Right cardiac atrium (tissue), 5 donors: ENCODE measurements at regions of chr9 and their contacts with region 1.

Region 1: DNA sequence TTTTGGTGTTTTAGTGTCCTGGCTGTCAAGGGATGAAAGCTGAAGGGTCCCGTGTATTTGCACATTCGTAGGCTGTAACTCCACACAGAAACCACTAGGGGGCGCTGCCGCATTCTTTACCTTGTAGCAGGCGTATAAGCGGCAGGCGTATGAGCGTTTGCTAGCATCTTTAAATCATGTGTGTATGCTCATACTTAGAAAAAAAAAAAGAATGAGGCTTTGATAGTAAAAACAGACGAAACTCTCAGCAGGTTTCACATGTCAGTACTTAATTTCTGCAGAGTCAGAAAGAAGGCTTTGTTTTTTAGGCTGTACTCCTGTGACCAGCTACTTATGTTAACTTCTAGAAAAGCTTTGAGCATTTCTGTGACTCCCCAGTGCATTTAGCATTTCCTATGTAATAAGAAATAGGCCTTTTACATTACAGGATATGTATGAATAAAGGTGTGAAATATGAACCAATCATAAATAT is 218.8 kb upstream of the ADAMTSL1 start:
- DNase-seq: peak; percentile 79 to 84 (median 80)
- ATAC-seq: peak; percentile 86 to 93
- H3K4me3 ChIP-seq: no peak overlapping the region
- H3K27ac ChIP-seq: no peak overlapping the region
- H3K4me1 ChIP-seq: peaks cover 2% of the 10 kb centered on the region
- H3K27me3 ChIP-seq: no peaks in the 10 kb centered on the region

Region 2: DNA sequence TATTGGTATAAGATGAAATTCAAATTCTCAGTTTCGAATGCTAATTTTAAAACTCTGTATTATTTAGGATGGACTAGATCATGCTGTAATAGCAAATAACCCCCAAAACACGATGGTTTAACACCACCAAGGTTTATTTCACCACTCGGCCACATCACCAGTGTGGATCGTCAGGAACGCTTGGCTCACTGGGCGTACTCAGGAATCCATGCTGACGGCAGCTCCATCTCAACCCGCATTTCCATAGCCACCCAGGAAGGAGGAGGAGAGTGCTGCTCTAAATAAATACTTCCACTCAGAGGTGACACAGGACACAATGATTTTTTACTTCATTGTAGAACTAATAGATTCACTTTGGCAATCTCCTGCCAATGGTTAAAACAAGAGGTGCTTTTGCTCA is 328.9 kb before region 1 on chr9:
- intact Hi-C with region 1: no loop called
- DNase-seq: no peak
- ATAC-seq: no peak
- H3K4me3 ChIP-seq: no peak overlapping the region
- H3K27ac ChIP-seq: no peak overlapping the region
- H3K4me1 ChIP-seq: no peaks in the 10 kb centered on the region
- H3K27me3 ChIP-seq: no peaks in the 10 kb centered on the region

Region 3: GRCh38 chr9:18173923-18174322 is 81.3 kb before region 1 on chr9:
- intact Hi-C with region 1: no loop called
- DNase-seq: no peak
- ATAC-seq: no peak
- H3K4me3 ChIP-seq: no peak overlapping the region
- H3K27ac ChIP-seq: no peak overlapping the region
- H3K4me1 ChIP-seq: no peaks in the 10 kb centered on the region
- H3K27me3 ChIP-seq: no peaks in the 10 kb centered on the region

Region 4: DNA sequence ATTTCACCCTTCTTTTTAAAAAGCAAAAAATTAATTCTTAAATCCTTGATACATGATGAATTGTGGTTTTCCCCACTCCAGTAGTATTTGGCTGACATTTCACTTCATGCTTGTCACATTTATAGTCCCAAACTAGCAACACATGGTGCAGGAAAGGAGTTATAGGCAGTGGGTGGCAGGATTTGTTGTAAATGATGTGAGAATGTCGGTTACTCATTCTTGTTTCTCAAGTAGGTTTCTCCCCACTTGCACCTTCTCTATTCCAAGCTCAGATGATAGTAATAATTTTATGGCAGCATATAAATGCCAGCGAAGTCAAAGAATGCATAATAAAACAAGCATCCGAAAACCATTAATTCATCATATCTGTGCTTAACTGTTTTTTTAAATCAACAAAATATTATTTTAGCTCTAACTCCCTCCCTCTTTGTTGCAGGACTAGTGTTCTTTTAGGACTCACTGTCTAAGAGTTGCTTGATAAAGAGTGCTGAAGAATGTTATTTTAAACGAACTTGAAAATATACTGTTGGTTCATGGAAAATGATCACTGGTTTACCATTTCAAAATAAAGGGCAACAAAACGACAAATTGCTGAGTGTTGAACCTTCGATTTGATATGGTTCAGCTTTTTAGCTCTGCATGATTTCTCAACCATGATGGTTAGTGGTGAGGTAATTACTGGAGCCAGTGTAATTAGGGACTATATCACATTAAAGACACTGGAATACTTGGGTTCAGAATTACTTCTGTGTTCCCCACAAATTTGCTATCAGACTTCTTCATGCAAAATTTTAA is 130.7 kb after region 1 on chr9:
- intact Hi-C with region 1: no loop called
- DNase-seq: no peak
- ATAC-seq: no peak
- H3K4me3 ChIP-seq: no peak overlapping the region
- H3K27ac ChIP-seq: no peak overlapping the region
- H3K4me1 ChIP-seq: peaks cover 1% of the 10 kb centered on the region
- H3K27me3 ChIP-seq: no peaks in the 10 kb centered on the region

Region 5: DNA sequence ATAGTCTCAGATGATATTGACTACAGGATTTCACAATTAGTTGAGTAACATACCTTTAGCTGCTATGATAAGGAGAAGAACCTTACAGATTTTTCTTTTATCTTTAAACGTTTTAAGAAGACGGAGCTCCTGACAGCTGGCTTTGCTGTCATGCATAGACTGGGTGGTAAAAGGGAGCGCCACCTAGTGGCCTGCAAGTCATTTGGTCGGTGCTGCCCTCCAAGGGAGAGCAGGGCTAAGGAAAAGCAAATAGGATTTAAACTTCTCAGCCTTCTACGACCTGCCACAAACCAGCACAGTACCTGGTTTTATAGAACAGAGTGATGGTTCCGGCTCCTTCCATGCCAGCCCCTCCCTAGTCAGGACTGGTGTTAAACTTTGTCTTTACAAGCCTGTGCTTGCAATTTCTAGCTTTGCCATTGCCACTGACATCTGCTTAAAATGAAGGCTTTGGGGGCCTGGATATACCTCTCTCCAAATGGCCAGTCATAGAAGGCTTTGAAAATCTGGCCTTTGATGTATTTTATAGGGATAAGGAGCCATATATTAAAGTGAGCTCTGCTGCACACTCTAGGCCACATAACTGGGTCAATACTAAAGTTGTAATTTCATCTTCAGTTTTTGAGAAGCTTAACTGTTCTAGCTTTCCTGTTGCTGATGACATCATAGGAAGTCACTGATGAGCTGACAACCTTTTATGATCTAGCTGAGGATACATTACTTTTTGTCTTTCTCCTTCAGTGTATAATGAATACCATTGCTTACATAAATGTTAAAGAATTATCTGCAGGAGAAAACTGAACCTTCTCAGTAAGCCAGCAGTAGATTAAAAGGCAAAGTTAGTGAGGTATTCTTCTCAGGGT is 187.7 kb after region 1 on chr9:
- intact Hi-C with region 1: loop called in 3 of 4 experiments (anchors 2 to 10 kb)
- DNase-seq: peak; percentile 71 to 83 (median 83)
- ATAC-seq: peak; percentile 74 to 85
- H3K4me3 ChIP-seq: no peak overlapping the region
- H3K27ac ChIP-seq: no peak overlapping the region
- H3K4me1 ChIP-seq: peaks cover 1% of the 10 kb centered on the region
- H3K27me3 ChIP-seq: no peaks in the 10 kb centered on the region